ENCODE measurements at regions of chr12 and their contacts with region 1.

Region 1: DNA sequence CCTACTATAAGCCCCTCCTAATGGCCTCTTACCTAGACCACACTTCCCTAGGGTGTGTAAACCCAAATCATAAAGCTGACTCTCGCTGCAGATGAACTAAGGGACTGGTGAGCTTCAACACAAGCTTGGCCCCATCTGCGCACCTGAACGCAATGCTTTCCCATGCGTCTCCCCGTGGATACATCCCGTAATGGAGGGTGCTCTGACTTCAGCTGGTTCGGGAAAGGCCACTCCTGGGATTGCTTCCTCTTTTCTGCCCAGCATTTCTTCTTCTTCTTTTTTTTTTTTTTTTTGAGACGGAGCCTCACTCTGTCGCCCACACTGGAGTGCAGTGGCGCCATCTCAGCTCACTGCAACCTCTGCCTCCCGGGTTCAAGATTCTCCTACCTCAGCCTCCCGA is 27.7 kb upstream of the ETFBKMT start:
- DNase-seq: peak in 1 of 2 experiments; percentile 23
- H3K4me3 ChIP-seq: no peak overlapping the region
- H3K4me3 Mint-ChIP-seq: no peak overlapping the region
- H3K27ac Mint-ChIP-seq: no peak overlapping the region
- H3K4me1 ChIP-seq: no peaks in the 10 kb centered on the region
- H3K4me1 Mint-ChIP-seq: peaks cover 20% of the 10 kb centered on the region
- H3K27me3 ChIP-seq: no peaks in the 10 kb centered on the region
- H3K27me3 Mint-ChIP-seq: no peaks in the 10 kb centered on the region
- CTCF ChIP-seq: no peak

Region 2: GRCh38 chr12:31245822-31246469 is 385.8 kb before region 1 on chr12:
- CTCF ChIA-PET with region 1: no interaction called
- POLR2A ChIA-PET with region 1: no interaction called
- intact Hi-C with region 1: loop called (anchors 2 kb)
- DNase-seq: peak in 1 of 2 experiments; percentile 46
- H3K4me3 ChIP-seq: no peak overlapping the region
- H3K4me3 Mint-ChIP-seq: no peak overlapping the region
- H3K27ac Mint-ChIP-seq: no peak overlapping the region
- H3K4me1 ChIP-seq: no peaks in the 10 kb centered on the region
- H3K4me1 Mint-ChIP-seq: no peaks in the 10 kb centered on the region
- H3K27me3 ChIP-seq: no peaks in the 10 kb centered on the region
- H3K27me3 Mint-ChIP-seq: peaks cover 3% of the 10 kb centered on the region
- CTCF ChIP-seq: peak; percentile 36 to 39

Region 3: GRCh38 chr12:31279525-31279924 is 352.3 kb before region 1 on chr12:
- CTCF ChIA-PET with region 1: no interaction called
- POLR2A ChIA-PET with region 1: no interaction called
- intact Hi-C with region 1: loop called (anchors 1 kb)
- DNase-seq: no peak
- H3K4me3 ChIP-seq: no peak overlapping the region
- H3K4me3 Mint-ChIP-seq: no peak overlapping the region
- H3K27ac Mint-ChIP-seq: no peak overlapping the region
- H3K4me1 ChIP-seq: no peaks in the 10 kb centered on the region
- H3K4me1 Mint-ChIP-seq: peaks cover 5% of the 10 kb centered on the region
- H3K27me3 ChIP-seq: no peaks in the 10 kb centered on the region
- H3K27me3 Mint-ChIP-seq: no peaks in the 10 kb centered on the region
- CTCF ChIP-seq: no peak

Region 4: DNA sequence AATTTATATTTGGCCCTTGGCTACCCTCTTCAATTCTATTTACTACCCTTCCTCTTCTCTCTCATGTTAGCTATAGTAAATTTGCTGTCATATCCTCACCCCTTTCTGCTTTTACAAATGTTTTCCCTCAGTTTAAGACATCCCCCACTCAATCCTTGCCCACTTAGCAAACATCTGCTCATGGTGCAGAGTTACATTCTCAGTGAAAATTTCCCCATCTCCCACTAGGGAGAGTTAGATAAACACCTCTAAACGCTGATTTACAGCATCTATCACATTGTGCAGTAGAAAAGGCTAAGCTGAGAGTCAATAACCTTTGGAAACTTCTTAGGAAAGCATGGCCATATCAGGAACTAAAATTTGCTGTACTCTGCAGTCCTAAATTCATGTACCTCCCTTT is 109.8 kb before region 1 on chr12:
- CTCF ChIA-PET with region 1: no interaction called
- POLR2A ChIA-PET with region 1: no interaction called
- intact Hi-C with region 1: loop called (anchors 1 kb)
- DNase-seq: no peak
- H3K4me3 ChIP-seq: no peak overlapping the region
- H3K4me3 Mint-ChIP-seq: no peak overlapping the region
- H3K27ac Mint-ChIP-seq: no peak overlapping the region
- H3K4me1 ChIP-seq: peaks cover 29% of the 10 kb centered on the region
- H3K4me1 Mint-ChIP-seq: peaks cover 33% of the 10 kb centered on the region
- H3K27me3 ChIP-seq: no peaks in the 10 kb centered on the region
- H3K27me3 Mint-ChIP-seq: no peaks in the 10 kb centered on the region
- CTCF ChIP-seq: no peak

Region 5: DNA sequence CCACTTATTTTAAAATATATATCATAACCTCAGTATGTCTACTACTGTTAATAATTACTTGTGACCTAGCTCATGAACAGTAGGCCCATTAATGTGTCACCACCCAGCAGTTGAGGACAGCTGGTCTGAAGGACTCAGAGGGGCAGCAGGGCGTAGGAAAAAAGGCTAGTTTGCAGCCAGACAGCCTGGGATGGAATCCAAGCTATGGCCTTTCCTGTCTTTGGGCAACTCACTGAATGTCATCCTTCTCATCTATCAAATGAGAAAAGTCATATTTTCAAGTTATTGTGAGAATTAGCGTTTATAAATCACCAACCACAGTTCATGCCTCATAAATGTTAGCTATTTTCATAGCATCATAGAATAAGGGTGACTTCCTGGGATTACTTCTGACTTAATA is 53.2 kb before region 1 on chr12:
- CTCF ChIA-PET with region 1: no interaction called
- POLR2A ChIA-PET with region 1: no interaction called
- intact Hi-C with region 1: loop called (anchors 5 kb)
- DNase-seq: no peak
- H3K4me3 ChIP-seq: no peak overlapping the region
- H3K4me3 Mint-ChIP-seq: no peak overlapping the region
- H3K27ac Mint-ChIP-seq: no peak overlapping the region
- H3K4me1 ChIP-seq: peaks cover 11% of the 10 kb centered on the region; the same call in 1 of the 2 replicates
- H3K4me1 Mint-ChIP-seq: no peaks in the 10 kb centered on the region
- H3K27me3 ChIP-seq: no peaks in the 10 kb centered on the region
- H3K27me3 Mint-ChIP-seq: no peaks in the 10 kb centered on the region
- CTCF ChIP-seq: no peak

Region 6: DNA sequence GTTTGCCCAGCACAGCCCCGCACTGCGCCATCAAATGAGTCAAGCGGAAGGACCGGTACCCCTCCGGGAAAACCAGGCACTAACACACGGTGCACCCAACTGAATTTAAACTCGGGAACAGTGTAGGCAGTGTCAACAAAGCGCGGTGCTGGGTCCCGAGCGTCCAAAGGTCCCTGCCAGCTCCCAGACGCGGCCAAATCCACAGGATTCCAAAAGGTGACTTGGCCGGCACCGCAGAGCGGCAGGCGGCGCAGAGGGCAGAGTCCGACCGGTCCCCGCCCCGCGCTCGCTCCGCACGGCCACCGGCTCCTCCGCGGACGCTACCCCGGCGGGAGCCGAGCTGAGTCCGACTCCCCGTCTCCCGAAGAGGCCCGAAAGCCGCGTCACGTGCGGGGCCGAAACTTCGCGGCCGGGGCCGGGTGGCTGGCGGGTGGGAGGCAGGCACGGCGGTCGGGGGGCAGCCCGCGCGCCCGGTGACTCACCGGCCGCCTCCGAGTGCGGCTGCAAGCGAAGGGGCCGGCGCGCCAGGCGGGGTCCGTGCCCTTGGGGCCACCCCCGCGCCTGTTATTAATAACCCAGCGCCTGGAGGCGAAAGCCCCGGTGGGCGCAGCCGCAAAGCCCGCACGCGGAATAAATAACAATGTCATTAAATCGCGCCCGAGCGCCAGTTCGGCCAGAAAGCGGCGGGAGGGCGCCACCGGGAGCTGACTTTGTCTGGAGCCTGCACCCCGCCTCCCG is 41.7 kb before region 1 on chr12:
- CTCF ChIA-PET with region 1: no interaction called
- POLR2A ChIA-PET with region 1: no interaction called
- intact Hi-C with region 1: loop called (anchors 1 kb)
- DNase-seq: peak; percentile 90 to 91
- H3K4me3 ChIP-seq: peak overlapping the region; percentile 85
- H3K4me3 Mint-ChIP-seq: peak overlapping the region; percentile 90
- H3K27ac Mint-ChIP-seq: peak overlapping the region; percentile 70
- H3K4me1 ChIP-seq: peaks cover 15% of the 10 kb centered on the region; the same call in 1 of the 2 replicates
- H3K4me1 Mint-ChIP-seq: peaks cover 22% of the 10 kb centered on the region
- H3K27me3 ChIP-seq: no peaks in the 10 kb centered on the region
- H3K27me3 Mint-ChIP-seq: no peaks in the 10 kb centered on the region
- CTCF ChIP-seq: peak in 1 of 2 experiments; percentile 16

Region 7: GRCh38 chr12:31620311-31620710 is 11.5 kb before region 1 on chr12:
- CTCF ChIA-PET with region 1: interaction called, 7 read pairs
- POLR2A ChIA-PET with region 1: no interaction called
- intact Hi-C with region 1: loop called (anchors 1 kb)
- DNase-seq: peak; percentile 77 to 88
- H3K4me3 ChIP-seq: no peak overlapping the region
- H3K4me3 Mint-ChIP-seq: peak overlapping the region; percentile 30
- H3K27ac Mint-ChIP-seq: peak overlapping the region; percentile 95
- H3K4me1 ChIP-seq: peaks cover 36% of the 10 kb centered on the region
- H3K4me1 Mint-ChIP-seq: peaks cover 11% of the 10 kb centered on the region
- H3K27me3 ChIP-seq: no peaks in the 10 kb centered on the region
- H3K27me3 Mint-ChIP-seq: no peaks in the 10 kb centered on the region
- CTCF ChIP-seq: no peak